HCT116 (cell line): ENCODE measurements at regions of chr14 and their contacts with region 1.

Region 1: DNA sequence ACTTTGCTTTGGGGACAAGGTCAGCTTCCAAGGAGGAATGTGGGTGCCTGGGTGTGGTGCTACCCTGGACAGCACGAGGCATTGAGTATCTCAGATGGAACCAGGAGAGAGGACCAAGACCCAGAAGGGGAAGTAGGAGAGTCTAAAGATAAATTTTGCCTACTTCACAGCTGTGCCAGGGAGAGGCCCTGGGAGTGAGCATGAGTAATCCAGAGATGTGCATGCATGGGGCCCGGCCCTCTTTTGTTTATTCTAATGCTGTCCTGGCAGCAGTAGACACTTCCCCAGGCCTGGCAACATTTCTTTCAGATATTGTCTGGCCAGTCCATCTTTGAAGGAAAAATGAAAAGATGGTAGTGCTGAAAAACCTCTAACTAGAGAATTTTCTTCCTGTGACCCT is 49.5 kb upstream of the GNPNAT1 start:
- DNase-seq: no peak
- ATAC-seq: peak; percentile 60; the same call in 1 of the 2 replicates
- H3K4me3 ChIP-seq: no peak overlapping the region
- H3K27ac ChIP-seq: no peak overlapping the region
- H3K4me1 ChIP-seq: peaks cover 8 to 15% of the 10 kb centered on the region in 2 experiments
- H3K27me3 ChIP-seq: no peaks in the 10 kb centered on the region
- CTCF ChIP-seq: no peak
- POLR2A ChIP-seq: no peak
- RAD21 ChIP-seq: no peak

Region 2: GRCh38 chr14:52950898-52951689 is 110.2 kb after region 1 on chr14 and contains the start of gene FERMT2:
- CTCF ChIA-PET with region 1: no interaction called
- POLR2A ChIA-PET with region 1: no interaction called
- RAD21 ChIA-PET with region 1: no interaction called
- intact Hi-C with region 1: loop called (anchors 5 kb)
- DNase-seq: peak; percentile 57
- ATAC-seq: peak; percentile 91
- H3K4me3 ChIP-seq: peak within 1 kb of the TSS; percentile 80 to 92
- H3K27ac ChIP-seq: peak within 1 kb of the TSS; percentile 85
- H3K4me1 ChIP-seq: peaks cover 11 to 22% of the 10 kb centered on the region in 2 experiments; a peak in 3 of 4 replicates
- H3K27me3 ChIP-seq: no peaks in the 10 kb centered on the region
- CTCF ChIP-seq: no peak
- POLR2A ChIP-seq: no peak
- RAD21 ChIP-seq: no peak
- total RNA-seq, gene FERMT2: 24.8 TPM

Region 3: DNA sequence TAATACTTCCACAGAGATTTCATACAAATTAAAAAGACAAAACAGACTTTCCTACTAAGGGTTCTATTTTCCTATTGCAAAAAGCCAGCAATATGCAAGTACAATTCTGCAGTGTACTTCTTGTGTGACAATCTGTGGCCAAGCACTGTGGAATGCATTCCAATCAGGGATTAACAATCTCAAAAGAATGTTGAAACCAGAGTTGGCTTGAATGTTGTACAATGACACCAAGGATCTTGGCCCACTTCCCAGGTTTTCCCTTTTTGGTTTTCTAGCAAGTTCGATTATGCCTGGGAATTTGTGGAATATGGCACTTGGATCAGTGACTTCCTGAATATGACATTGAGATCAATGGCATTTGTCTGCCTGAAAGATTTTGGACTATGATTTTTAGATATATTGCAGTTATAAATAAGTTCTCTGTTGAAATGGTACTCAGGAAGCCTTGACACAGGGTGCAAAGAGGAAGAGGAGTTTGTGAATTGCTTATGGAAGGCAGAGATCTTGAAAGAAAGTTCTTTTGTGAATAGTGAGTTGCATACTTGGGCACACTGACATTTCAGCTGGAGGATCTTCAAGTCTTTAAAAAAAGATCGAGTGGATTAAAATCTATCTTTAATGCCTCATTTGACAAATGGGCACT is 191.4 kb after region 1 on chr14:
- CTCF ChIA-PET with region 1: no interaction called
- POLR2A ChIA-PET with region 1: no interaction called
- RAD21 ChIA-PET with region 1: no interaction called
- intact Hi-C with region 1: no loop called
- DNase-seq: peak; percentile 40
- ATAC-seq: peak; percentile 76
- H3K4me3 ChIP-seq: no peak overlapping the region
- H3K27ac ChIP-seq: no peak overlapping the region
- H3K4me1 ChIP-seq: peaks cover 8 to 16% of the 10 kb centered on the region in 2 experiments
- H3K27me3 ChIP-seq: no peaks in the 10 kb centered on the region
- CTCF ChIP-seq: no peak
- POLR2A ChIP-seq: no peak
- RAD21 ChIP-seq: no peak

Region 4: GRCh38 chr14:53113989-53114388 is 273.1 kb after region 1 on chr14:
- CTCF ChIA-PET with region 1: no interaction called
- POLR2A ChIA-PET with region 1: no interaction called
- RAD21 ChIA-PET with region 1: no interaction called
- intact Hi-C with region 1: no loop called
- DNase-seq: no peak
- ATAC-seq: no peak
- H3K4me3 ChIP-seq: no peak overlapping the region
- H3K27ac ChIP-seq: no peak overlapping the region
- H3K4me1 ChIP-seq: no peaks in the 10 kb centered on the region
- H3K27me3 ChIP-seq: no peaks in the 10 kb centered on the region
- CTCF ChIP-seq: no peak
- POLR2A ChIP-seq: no peak
- RAD21 ChIP-seq: no peak